K562 (cell line): ENCODE measurements at regions of chr19 and their contacts with region 1.

Region 1: GRCh38 chr19:17292286-17293097 is 10.7 kb downstream of the ABHD8 start:
- DNase-seq: peak; percentile 93 to 96 (median 96)
- ATAC-seq: peak; percentile 91
- H3K4me3 ChIP-seq: peak overlapping the region; percentile 62
- H3K27ac ChIP-seq: peak overlapping the region; percentile 70
- H3K4me1 ChIP-seq: peaks cover 12 to 45% of the 10 kb centered on the region in 2 experiments; a peak in 4 of 5 replicates
- H3K27me3 ChIP-seq: no peaks in the 10 kb centered on the region
- CTCF ChIP-seq: peak; percentile 88 to 96 (median 91)
- EP300 ChIP-seq: peak; percentile 24; the same call in 1 of the 2 replicates
- POLR2A ChIP-seq: peak; percentile 84
- RAD21 ChIP-seq: peak; percentile 64 to 87

Region 2: GRCh38 chr19:16897154-16897855 is 395.2 kb before region 1 on chr19:
- CTCF ChIA-PET with region 1: no interaction called
- POLR2A ChIA-PET with region 1: no interaction called
- in situ Hi-C with region 1: no loop called
- intact Hi-C with region 1: loop called (anchors 5 kb)
- DNase-seq: peak; percentile 96 to 99 (median 96)
- ATAC-seq: peak; percentile 86
- H3K4me3 ChIP-seq: peak overlapping the region; percentile 71
- H3K27ac ChIP-seq: peak overlapping the region; percentile 88
- H3K4me1 ChIP-seq: peaks cover 14 to 61% of the 10 kb centered on the region in 2 experiments
- H3K27me3 ChIP-seq: no peaks in the 10 kb centered on the region
- CTCF ChIP-seq: no peak
- EP300 ChIP-seq: no peak
- POLR2A ChIP-seq: peak; percentile 77
- RAD21 ChIP-seq: no peak

Region 3: DNA sequence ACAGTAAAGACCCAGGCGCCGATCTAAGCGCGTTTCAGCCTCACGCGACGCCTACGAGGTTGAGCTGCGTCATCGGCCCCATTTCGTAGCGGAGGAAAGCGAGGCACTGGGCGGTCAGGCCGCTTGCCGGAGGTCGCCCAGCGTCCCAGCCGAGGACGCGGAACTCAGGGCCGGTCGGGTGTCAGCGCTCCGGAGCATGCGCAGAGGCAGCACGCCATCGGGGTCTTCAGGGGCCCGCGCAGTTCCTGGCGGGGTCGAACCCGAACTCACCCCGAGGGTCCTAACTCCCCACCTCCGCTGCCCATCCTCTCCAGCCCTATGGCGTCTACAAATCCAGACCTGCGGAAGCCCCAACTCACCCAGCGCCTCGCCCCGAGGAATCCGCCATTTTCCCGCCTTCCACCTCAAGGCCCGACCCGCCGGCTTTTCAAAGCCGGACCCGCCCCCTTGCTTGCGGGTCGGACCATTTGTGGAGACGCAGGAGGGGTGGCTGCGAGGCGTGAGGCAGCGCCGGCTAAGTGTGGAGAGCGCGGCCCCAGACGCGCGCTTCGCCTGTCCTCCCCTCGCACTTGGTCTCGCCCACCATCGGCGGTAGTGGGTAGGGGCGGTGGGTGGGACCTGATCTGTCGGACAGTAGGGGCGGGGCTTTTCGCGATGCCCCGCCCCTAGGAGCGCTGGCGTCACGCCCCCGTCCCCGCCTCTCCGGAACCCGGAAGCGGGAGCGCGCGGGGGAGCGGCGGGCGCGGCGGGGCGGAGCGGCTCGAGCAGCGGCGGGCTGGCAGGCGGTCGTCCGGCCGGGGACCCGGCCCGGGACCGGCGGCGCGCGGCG is 217.2 kb before region 1 on chr19 and contains the starts of genes HAUS8 and MYO9B:
- CTCF ChIA-PET with region 1: no interaction called
- POLR2A ChIA-PET with region 1: no interaction called
- in situ Hi-C with region 1: loop called (anchors 5 kb)
- intact Hi-C with region 1: no loop called
- DNase-seq: peak; percentile 96 to 100 (median 98)
- ATAC-seq: peak; percentile 90
- H3K4me3 ChIP-seq: peak within 1 kb of the TSS; percentile 78
- H3K27ac ChIP-seq: peak within 1 kb of the TSS; percentile 92
- H3K4me1 ChIP-seq: peaks cover 28 to 58% of the 10 kb centered on the region in 2 experiments; a peak in 4 of 5 replicates
- H3K27me3 ChIP-seq: no peaks in the 10 kb centered on the region; a peak in 1 of 5 replicates
- CTCF ChIP-seq: 0 out of 6 replicates have a peak, but pooled peaks of 1 of the 3 experiments have one; percentile 2
- EP300 ChIP-seq: peak; percentile 7; the same call in 1 of the 2 replicates
- POLR2A ChIP-seq: peak; percentile 98
- RAD21 ChIP-seq: no peak
- polyA plus RNA-seq, gene HAUS8: 34.5 to 53.2 TPM
- polyA plus RNA-seq, gene MYO9B: 2.4 to 3.0 TPM

Region 4: DNA sequence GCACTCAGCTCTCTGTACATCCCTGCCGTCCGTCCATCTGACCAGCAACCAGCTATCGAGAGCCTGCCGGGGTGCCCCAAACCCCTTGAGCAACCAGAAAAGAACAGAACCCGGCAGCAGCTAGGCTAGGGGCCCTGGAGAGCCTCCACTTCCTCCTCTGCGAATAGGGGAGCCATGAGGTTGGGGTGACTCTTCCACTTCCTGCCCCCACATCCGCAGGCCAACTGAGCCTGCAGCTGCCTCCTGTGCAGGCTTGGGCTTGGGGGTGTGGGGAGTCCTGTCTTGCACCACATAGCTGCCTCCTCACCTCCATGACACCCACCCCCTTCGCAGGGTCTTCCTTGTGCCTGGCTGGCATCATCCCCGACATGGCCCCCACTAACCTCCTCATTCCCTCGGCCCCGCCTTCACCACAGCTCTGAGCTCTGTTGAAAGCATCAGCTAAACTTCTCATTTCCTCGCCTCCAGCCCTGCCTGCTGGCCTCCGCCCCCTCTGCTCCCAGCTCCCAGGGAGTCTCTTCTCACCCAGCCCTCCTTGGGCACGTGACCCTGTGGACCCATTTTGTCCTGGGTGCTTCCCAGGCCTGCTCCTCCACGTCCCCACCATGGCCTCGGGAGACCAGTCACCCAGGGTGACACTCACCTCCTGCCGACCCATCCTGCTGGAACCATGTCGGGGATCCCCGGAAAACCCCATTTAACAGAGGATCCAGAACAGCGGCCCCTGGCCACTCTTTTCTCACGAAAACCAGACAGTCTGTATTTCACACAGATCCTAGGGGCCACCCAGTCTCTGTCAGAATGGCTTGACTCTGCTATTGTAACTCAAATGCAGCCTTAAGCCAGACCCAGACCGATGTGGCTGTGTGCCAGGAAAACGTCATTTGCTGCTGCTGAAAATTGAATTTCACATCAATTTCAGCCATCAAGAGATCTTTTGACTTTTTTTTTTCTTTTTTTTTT is 166.5 kb before region 1 on chr19:
- CTCF ChIA-PET with region 1: no interaction called
- POLR2A ChIA-PET with region 1: no interaction called
- in situ Hi-C with region 1: no loop called
- intact Hi-C with region 1: no loop called
- DNase-seq: no peak
- ATAC-seq: no peak
- H3K4me3 ChIP-seq: no peak overlapping the region
- H3K27ac ChIP-seq: no peak overlapping the region
- H3K4me1 ChIP-seq: peaks cover 0 to 8% of the 10 kb centered on the region in 2 experiments; a peak in 2 of 5 replicates
- H3K27me3 ChIP-seq: no peaks in the 10 kb centered on the region
- CTCF ChIP-seq: no peak
- EP300 ChIP-seq: no peak
- POLR2A ChIP-seq: no peak
- RAD21 ChIP-seq: no peak

Region 5: GRCh38 chr19:17305517-17306284 is 13.2 kb after region 1 on chr19 and contains the start of gene MRPL34:
- CTCF ChIA-PET with region 1: interaction called, 6 read pairs
- POLR2A ChIA-PET with region 1: interaction called, 7 read pairs
- in situ Hi-C with region 1: no loop called
- intact Hi-C with region 1: loop called (anchors 1 kb)
- DNase-seq: peak; percentile 70 to 99 (median 81)
- ATAC-seq: peak; percentile 65
- H3K4me3 ChIP-seq: peak within 1 kb of the TSS; percentile 58
- H3K27ac ChIP-seq: peak within 1 kb of the TSS; percentile 86
- H3K4me1 ChIP-seq: peaks cover 31 to 74% of the 10 kb centered on the region in 2 experiments; a peak in 4 of 5 replicates
- H3K27me3 ChIP-seq: no peaks in the 10 kb centered on the region
- CTCF ChIP-seq: peak; percentile 83 to 97 (median 93)
- EP300 ChIP-seq: peak; percentile 45; the same call in 1 of the 2 replicates
- POLR2A ChIP-seq: peak; percentile 87
- RAD21 ChIP-seq: peak; percentile 61 to 66
- polyA plus RNA-seq, gene MRPL34: 11.5 to 20.6 TPM

Region 6: GRCh38 chr19:17336872-17337722 is 44.6 kb after region 1 on chr19 and contains the start of gene GTPBP3:
- CTCF ChIA-PET with region 1: interaction called, 3 read pairs
- POLR2A ChIA-PET with region 1: interaction called, 3 read pairs
- in situ Hi-C with region 1: no loop called
- intact Hi-C with region 1: loop called (anchors 2 kb)
- DNase-seq: peak; percentile 91 to 100 (median 96)
- ATAC-seq: peak; percentile 82
- H3K4me3 ChIP-seq: peak within 1 kb of the TSS; percentile 84
- H3K27ac ChIP-seq: peak within 1 kb of the TSS; percentile 87
- H3K4me1 ChIP-seq: peaks cover 29 to 79% of the 10 kb centered on the region in 2 experiments; a peak in 4 of 5 replicates
- H3K27me3 ChIP-seq: no peaks in the 10 kb centered on the region
- CTCF ChIP-seq: peak in 1 of 3 experiments; percentile 9; a peak in 1 of 6 replicates
- EP300 ChIP-seq: peak; percentile 65
- POLR2A ChIP-seq: peak; percentile 92
- RAD21 ChIP-seq: no peak
- polyA plus RNA-seq, gene GTPBP3: 4.9 to 5.6 TPM

Region 7: GRCh38 chr19:17385878-17386611 is 93.6 kb after region 1 on chr19:
- CTCF ChIA-PET with region 1: interaction called, 7 read pairs
- POLR2A ChIA-PET with region 1: no interaction called
- in situ Hi-C with region 1: loop called (anchors 5 kb)
- intact Hi-C with region 1: loop called (anchors 1 kb)
- DNase-seq: peak; percentile 75 to 78 (median 76)
- ATAC-seq: peak; percentile 80
- H3K4me3 ChIP-seq: no peak overlapping the region
- H3K27ac ChIP-seq: no peak overlapping the region
- H3K4me1 ChIP-seq: peaks cover 7 to 15% of the 10 kb centered on the region in 2 experiments; a peak in 3 of 5 replicates
- H3K27me3 ChIP-seq: no peaks in the 10 kb centered on the region
- CTCF ChIP-seq: peak; percentile 89 to 97 (median 95)
- EP300 ChIP-seq: no peak
- POLR2A ChIP-seq: no peak
- RAD21 ChIP-seq: peak; percentile 71 to 85

Region 8: GRCh38 chr19:17469481-17470067 is 177.1 kb after region 1 on chr19:
- CTCF ChIA-PET with region 1: no interaction called
- POLR2A ChIA-PET with region 1: no interaction called
- in situ Hi-C with region 1: no loop called
- intact Hi-C with region 1: loop called (anchors 5 kb)
- DNase-seq: peak; percentile 92 to 98 (median 94)
- ATAC-seq: peak; percentile 84
- H3K4me3 ChIP-seq: peak overlapping the region; percentile 76
- H3K27ac ChIP-seq: peak overlapping the region; percentile 73
- H3K4me1 ChIP-seq: peaks cover 30 to 43% of the 10 kb centered on the region in 2 experiments
- H3K27me3 ChIP-seq: no peaks in the 10 kb centered on the region; a peak in 1 of 5 replicates
- CTCF ChIP-seq: no peak
- EP300 ChIP-seq: no peak
- POLR2A ChIP-seq: 0 out of 2 replicates have a peak, but pooled peaks have one; percentile 31
- RAD21 ChIP-seq: no peak